CD8-positive, alpha-beta memory T cell (primary cell): ENCODE measurements at regions of chr2 and their contacts with region 1.

Region 1: DNA sequence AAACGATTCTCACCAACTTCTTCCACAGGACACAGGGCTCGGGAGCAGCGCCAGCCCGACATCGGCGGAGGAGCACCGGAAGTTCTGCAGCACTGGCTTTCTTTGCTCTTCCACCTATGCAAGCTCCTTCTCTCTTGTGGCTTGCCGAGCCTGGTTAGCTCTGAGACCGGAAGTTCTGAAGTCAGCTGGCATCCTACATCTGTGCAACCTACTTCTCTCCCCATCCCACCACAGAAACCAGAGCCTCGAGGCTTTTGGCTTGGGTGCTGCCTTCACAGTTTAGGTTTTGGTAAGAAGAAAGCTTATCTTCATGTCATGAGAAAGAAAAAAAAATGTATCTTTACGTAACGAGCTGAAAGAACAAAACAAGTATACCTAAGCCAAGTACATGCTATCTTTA is 111.7 kb downstream of the ANKRD44 start:
- DNase-seq: peak; percentile 77 to 97 (median 96)
- H3K4me3 ChIP-seq: peak overlapping the region; percentile 35
- H3K4me3 Mint-ChIP-seq: peak overlapping the region; percentile 88 to 94 (median 93)
- H3K27ac ChIP-seq: peak overlapping the region; percentile 52
- H3K27ac Mint-ChIP-seq: peak overlapping the region; percentile 88 to 99 (median 97)
- H3K4me1 ChIP-seq: peaks cover 91% of the 10 kb centered on the region
- H3K4me1 Mint-ChIP-seq: peaks cover 92 to 97% (median 96%) of the 10 kb centered on the region in 3 donors
- H3K27me3 ChIP-seq: no peaks in the 10 kb centered on the region
- H3K27me3 Mint-ChIP-seq: no peaks in the 10 kb centered on the region

Region 2: DNA sequence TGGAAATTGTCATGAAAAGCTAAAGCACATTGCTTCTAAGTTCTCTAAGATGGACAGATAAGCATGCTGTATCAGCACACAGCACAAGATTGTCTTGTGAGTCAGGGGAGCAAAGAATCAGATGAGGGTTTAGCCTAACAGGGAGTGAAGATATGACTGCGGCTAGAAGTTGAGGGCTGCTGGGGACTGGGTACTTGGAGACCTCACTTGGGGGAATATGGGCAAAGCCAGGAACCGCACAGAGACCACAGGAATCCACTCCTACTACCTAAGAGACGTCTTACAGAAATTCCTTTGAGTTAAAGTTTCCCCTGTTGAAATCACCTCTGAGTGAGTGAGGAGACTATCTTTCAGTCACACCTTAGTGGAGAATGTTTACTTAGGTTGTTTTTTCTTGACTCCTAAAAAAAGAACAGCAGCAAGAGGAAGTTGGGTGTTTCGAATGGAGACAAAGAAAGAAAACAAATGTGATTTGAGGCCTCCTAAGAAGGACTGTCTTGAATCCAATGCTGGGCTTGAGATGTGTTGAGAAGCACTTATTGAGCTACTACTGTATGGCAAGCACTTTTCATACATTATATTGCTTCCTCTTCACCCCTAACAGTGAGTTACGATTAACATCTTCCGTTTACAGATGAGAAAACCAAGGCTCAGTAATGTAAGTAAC is 11.0 kb after region 1 on chr2:
- CTCF ChIA-PET with region 1: interaction called, 28 read pairs
- POLR2A ChIA-PET with region 1: interaction called, 25 read pairs
- DNase-seq: peak; percentile 34 to 64 (median 36)
- H3K4me3 ChIP-seq: peak overlapping the region; percentile 21
- H3K4me3 Mint-ChIP-seq: peak overlapping the region; percentile 36 to 89 (median 74)
- H3K27ac ChIP-seq: peak overlapping the region; percentile 26
- H3K27ac Mint-ChIP-seq: peak overlapping the region; percentile 92 to 100 (median 96)
- H3K4me1 ChIP-seq: peaks cover 99% of the 10 kb centered on the region
- H3K4me1 Mint-ChIP-seq: peaks cover 97 to 99% (median 98%) of the 10 kb centered on the region in 3 donors
- H3K27me3 ChIP-seq: no peaks in the 10 kb centered on the region
- H3K27me3 Mint-ChIP-seq: no peaks in the 10 kb centered on the region

Region 3: GRCh38 chr2:197239434-197239833 is 40.5 kb after region 1 on chr2:
- CTCF ChIA-PET with region 1: interaction called, 11 read pairs
- POLR2A ChIA-PET with region 1: interaction called, 23 read pairs
- DNase-seq: peak in 1 of 5 donors; percentile 22
- H3K4me3 ChIP-seq: peak overlapping the region; percentile 45
- H3K4me3 Mint-ChIP-seq: peak overlapping the region; percentile 76 to 92 (median 87)
- H3K27ac ChIP-seq: peak overlapping the region; percentile 20
- H3K27ac Mint-ChIP-seq: peak overlapping the region; percentile 74 to 99 (median 94)
- H3K4me1 ChIP-seq: peaks cover 97% of the 10 kb centered on the region
- H3K4me1 Mint-ChIP-seq: peaks cover 85 to 98% (median 92%) of the 10 kb centered on the region in 3 donors
- H3K27me3 ChIP-seq: no peaks in the 10 kb centered on the region
- H3K27me3 Mint-ChIP-seq: no peaks in the 10 kb centered on the region

Region 4: GRCh38 chr2:197255543-197255942 is 56.7 kb after region 1 on chr2:
- CTCF ChIA-PET with region 1: interaction called, 20 read pairs
- POLR2A ChIA-PET with region 1: interaction called, 11 read pairs
- DNase-seq: peak; percentile 62 to 85 (median 71)
- H3K4me3 ChIP-seq: peak overlapping the region; percentile 49
- H3K4me3 Mint-ChIP-seq: peak overlapping the region; percentile 67 to 83 (median 78)
- H3K27ac ChIP-seq: peak overlapping the region; percentile 60
- H3K27ac Mint-ChIP-seq: peak overlapping the region; percentile 89 to 99 (median 96)
- H3K4me1 ChIP-seq: peaks cover 78% of the 10 kb centered on the region
- H3K4me1 Mint-ChIP-seq: peaks cover 72 to 91% (median 88%) of the 10 kb centered on the region in 3 donors
- H3K27me3 ChIP-seq: no peaks in the 10 kb centered on the region
- H3K27me3 Mint-ChIP-seq: no peaks in the 10 kb centered on the region

Region 5: DNA sequence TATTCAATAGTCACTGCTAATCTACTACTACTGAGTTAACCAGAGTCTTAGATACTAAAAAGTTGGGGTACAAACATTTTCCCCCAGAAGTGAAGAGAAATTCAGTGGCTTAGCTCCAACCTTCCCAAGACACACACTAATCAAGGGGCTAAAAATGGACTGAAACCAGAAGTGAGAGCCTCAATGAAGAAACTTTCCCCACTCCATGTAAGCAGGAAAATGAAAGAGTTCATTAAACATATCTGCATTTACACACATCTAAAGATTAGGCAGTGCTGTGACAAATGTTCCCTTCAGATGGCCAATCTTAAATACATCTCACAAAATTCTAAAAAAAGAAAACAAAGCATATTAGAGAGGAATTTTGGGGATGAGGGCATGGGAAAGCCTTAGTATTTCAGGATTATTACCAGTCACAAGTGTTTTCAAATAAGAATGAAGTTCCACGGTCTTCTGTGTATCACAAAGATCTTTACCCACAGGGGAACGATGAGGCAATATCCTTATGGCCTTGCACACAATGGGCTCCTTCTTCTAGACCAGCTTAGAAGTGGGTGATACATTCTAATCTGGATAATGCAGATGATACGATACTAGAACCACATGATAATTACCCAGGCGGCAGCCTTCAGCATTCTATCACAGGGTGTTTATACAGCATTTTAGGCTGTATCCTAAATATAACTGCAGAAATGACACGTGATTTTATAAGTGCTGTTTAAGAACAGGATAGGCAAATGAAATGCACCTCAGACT is 94.5 kb after region 1 on chr2:
- CTCF ChIA-PET with region 1: interaction called, 10 read pairs
- POLR2A ChIA-PET with region 1: interaction called, 4 read pairs
- DNase-seq: peak in 3 of 5 donors; percentile 10 to 56 (median 50)
- H3K4me3 ChIP-seq: peak overlapping the region; percentile 13
- H3K4me3 Mint-ChIP-seq: peak overlapping the region; percentile 60 to 92 (median 85)
- H3K27ac ChIP-seq: peak overlapping the region; percentile 15
- H3K27ac Mint-ChIP-seq: peak overlapping the region; percentile 92 to 99 (median 97)
- H3K4me1 ChIP-seq: peaks cover 94% of the 10 kb centered on the region
- H3K4me1 Mint-ChIP-seq: peaks cover 93 to 97% (median 94%) of the 10 kb centered on the region in 3 donors
- H3K27me3 ChIP-seq: no peaks in the 10 kb centered on the region
- H3K27me3 Mint-ChIP-seq: no peaks in the 10 kb centered on the region

Region 6: DNA sequence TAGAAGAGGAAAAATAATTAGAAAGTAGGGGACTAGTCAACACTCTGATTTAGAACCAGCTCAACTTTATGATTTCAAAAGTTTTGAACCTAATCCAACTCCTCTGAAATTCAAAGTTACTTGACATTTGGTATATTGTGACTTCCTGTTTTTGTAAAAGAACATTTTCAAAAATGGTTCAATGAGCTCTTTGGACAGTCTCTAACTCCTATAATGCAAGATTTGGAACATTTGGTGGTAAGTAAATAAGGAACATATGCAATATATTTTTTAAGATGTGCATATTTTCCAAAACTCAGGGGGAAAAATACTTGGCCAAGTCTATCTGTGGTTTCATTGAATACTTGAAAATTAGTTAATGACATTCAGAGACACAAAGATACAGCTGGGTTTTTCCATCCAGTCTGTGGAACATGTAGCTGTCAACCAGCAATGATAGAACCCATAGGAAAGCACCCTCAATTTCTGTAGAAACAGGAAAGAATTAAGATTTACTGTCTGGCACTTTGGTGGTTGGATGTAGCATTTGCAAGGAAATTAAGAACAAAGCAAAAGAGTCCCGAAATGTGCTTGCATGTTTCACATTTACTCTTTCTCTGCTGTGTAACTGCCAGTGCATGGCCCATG is 128.7 kb after region 1 on chr2:
- CTCF ChIA-PET with region 1: interaction called, 11 read pairs
- POLR2A ChIA-PET with region 1: interaction called, 4 read pairs
- DNase-seq: no peak
- H3K4me3 ChIP-seq: no peak overlapping the region
- H3K4me3 Mint-ChIP-seq: peak overlapping the region in 6 of 7 donors; percentile 22 to 76 (median 59)
- H3K27ac ChIP-seq: no peak overlapping the region
- H3K27ac Mint-ChIP-seq: peak overlapping the region; percentile 24 to 89 (median 79)
- H3K4me1 ChIP-seq: peaks cover 55% of the 10 kb centered on the region
- H3K4me1 Mint-ChIP-seq: peaks cover 44 to 60% (median 60%) of the 10 kb centered on the region in 3 donors
- H3K27me3 ChIP-seq: no peaks in the 10 kb centered on the region
- H3K27me3 Mint-ChIP-seq: no peaks in the 10 kb centered on the region

Region 7: GRCh38 chr2:197405582-197405981 is 206.7 kb after region 1 on chr2:
- CTCF ChIA-PET with region 1: no interaction called
- POLR2A ChIA-PET with region 1: no interaction called
- DNase-seq: no peak
- H3K4me3 ChIP-seq: no peak overlapping the region
- H3K4me3 Mint-ChIP-seq: no peak overlapping the region
- H3K27ac ChIP-seq: no peak overlapping the region
- H3K27ac Mint-ChIP-seq: no peak overlapping the region
- H3K4me1 ChIP-seq: no peaks in the 10 kb centered on the region
- H3K4me1 Mint-ChIP-seq: peaks cover 0 to 4% (median 0%) of the 10 kb centered on the region in 3 donors
- H3K27me3 ChIP-seq: no peaks in the 10 kb centered on the region
- H3K27me3 Mint-ChIP-seq: no peaks in the 10 kb centered on the region